ENCODE measurements at regions of chr13 and their contacts with region 1.

Region 1: GRCh38 chr13:30465585-30466357 is at the start of gene HMGB1:
- DNase-seq: peak; percentile 96 to 98 (median 96)
- H3K4me3 ChIP-seq: peak within 1 kb of the TSS; percentile 69 to 80
- H3K4me3 Mint-ChIP-seq: peak within 1 kb of the TSS; percentile 93 to 98 (median 95)
- H3K27ac ChIP-seq: peak within 1 kb of the TSS; percentile 90
- H3K27ac Mint-ChIP-seq: peak within 1 kb of the TSS; percentile 97 to 99 (median 99)
- H3K4me1 ChIP-seq: peaks cover 33% of the 10 kb centered on the region
- H3K4me1 Mint-ChIP-seq: peaks cover 15 to 52% (median 24%) of the 10 kb centered on the region in 4 donors
- H3K27me3 ChIP-seq: no peaks in the 10 kb centered on the region
- H3K27me3 Mint-ChIP-seq: peaks cover 2 to 3% of the 10 kb centered on the region in 2 donors
- total RNA-seq, gene HMGB1: 311 to 331 TPM

Region 2: DNA sequence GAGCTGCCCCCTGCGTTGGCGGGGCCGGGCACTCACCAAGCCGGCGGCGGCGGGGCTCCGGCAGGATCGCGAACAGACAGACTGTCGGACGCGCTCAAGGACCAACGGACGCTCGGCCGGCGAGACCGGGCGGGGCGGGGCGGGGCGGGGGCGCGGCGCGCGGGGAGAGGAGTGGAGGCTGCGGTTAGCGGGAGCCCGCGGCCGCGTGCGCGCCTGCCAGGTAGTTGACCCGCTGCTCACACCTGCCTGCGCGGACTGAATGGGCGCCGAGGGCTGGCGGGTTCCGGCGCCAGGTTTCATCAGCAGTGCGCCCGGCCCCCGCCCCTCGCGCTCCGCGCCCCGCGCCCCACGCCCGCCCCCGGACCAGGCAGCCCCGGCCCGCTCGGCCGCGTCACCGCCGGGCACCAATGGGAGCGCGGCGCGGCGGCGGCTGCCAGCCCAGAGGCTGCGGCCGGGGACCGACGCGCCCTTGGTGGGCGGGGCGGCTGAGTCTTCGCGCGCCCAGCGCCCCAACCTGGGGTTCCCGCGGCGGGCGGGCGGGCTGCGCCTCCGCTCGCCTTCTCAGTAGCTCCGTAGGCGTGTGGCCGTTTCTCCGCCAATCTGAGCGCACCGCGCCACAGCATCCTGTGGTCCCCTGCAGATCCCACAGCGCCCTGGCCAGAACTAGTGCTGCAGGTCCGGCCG is 870.2 kb before region 1 on chr13 and contains the start of gene SLC7A1:
- CTCF ChIA-PET with region 1: no interaction called
- POLR2A ChIA-PET with region 1: no interaction called
- intact Hi-C with region 1: loop called (anchors 2 kb)
- DNase-seq: peak; percentile 80 to 90 (median 88)
- H3K4me3 ChIP-seq: peak within 1 kb of the TSS; percentile 59 to 61
- H3K4me3 Mint-ChIP-seq: peak within 1 kb of the TSS; percentile 87 to 94 (median 92)
- H3K27ac ChIP-seq: peak within 1 kb of the TSS; percentile 66
- H3K27ac Mint-ChIP-seq: peak within 1 kb of the TSS; percentile 90 to 97 (median 93)
- H3K4me1 ChIP-seq: peaks cover 25% of the 10 kb centered on the region
- H3K4me1 Mint-ChIP-seq: peaks cover 22 to 49% (median 34%) of the 10 kb centered on the region in 4 donors
- H3K27me3 ChIP-seq: no peaks in the 10 kb centered on the region
- H3K27me3 Mint-ChIP-seq: peaks cover 0 to 1% of the 10 kb centered on the region in 2 donors
- total RNA-seq, gene SLC7A1: 38.6 to 42.6 TPM

Region 3: DNA sequence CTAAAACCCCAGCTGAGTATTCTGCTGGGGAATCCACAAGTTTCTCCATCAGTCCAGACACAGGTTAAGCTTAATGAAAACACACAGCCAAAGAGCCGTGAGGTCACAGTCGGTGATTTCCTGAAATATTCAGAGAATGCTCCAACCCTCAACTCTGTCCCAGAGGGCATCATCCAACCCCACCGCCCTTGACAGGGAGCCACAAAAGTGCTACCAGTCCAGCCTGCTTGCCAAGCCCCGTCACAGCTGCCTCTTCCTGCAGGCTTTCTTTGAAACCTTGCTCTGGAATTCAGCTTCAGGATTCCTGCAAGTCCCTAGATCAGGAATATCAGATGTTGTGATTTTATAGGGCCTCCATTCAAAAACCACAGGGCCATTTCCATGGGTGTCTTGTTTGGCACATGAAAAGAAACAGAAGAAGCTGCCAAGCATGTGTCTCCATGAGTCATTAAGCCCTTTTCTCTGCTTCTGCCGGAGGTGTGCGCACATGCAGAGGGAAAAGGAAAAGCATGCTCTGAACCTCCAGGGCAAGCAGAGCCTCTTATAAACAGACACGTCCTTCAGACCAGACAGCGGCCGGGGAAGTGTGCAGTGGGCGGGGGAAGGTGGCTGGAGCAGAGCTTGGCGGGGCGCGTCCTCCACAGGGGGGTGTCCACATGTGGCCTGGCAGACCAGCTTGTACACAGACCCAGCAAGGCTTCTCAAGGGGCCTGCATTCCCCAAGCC is 323.1 kb before region 1 on chr13:
- CTCF ChIA-PET with region 1: interaction called, 4 read pairs
- POLR2A ChIA-PET with region 1: interaction called, 27 read pairs
- intact Hi-C with region 1: no loop called
- DNase-seq: peak; percentile 13 to 64 (median 22)
- H3K4me3 ChIP-seq: no peak overlapping the region
- H3K4me3 Mint-ChIP-seq: peak overlapping the region in 7 of 8 donors; percentile 4 to 74 (median 53)
- H3K27ac ChIP-seq: peak overlapping the region; percentile 27
- H3K27ac Mint-ChIP-seq: peak overlapping the region; percentile 83 to 92 (median 88)
- H3K4me1 ChIP-seq: peaks cover 67% of the 10 kb centered on the region
- H3K4me1 Mint-ChIP-seq: peaks cover 49 to 86% (median 70%) of the 10 kb centered on the region in 4 donors
- H3K27me3 ChIP-seq: no peaks in the 10 kb centered on the region
- H3K27me3 Mint-ChIP-seq: no peaks in the 10 kb centered on the region

Region 4: GRCh38 chr13:30306762-30307193 is 159.0 kb before region 1 on chr13:
- CTCF ChIA-PET with region 1: interaction called, 4 read pairs
- POLR2A ChIA-PET with region 1: interaction called, 26 read pairs
- intact Hi-C with region 1: loop called (anchors 1 kb)
- DNase-seq: peak; percentile 88 to 92 (median 89)
- H3K4me3 ChIP-seq: peak overlapping the region; percentile 55 to 79
- H3K4me3 Mint-ChIP-seq: peak overlapping the region; percentile 90 to 93 (median 91)
- H3K27ac ChIP-seq: peak overlapping the region; percentile 68
- H3K27ac Mint-ChIP-seq: peak overlapping the region; percentile 75 to 93 (median 90)
- H3K4me1 ChIP-seq: peaks cover 28% of the 10 kb centered on the region
- H3K4me1 Mint-ChIP-seq: peaks cover 25 to 46% (median 30%) of the 10 kb centered on the region in 4 donors
- H3K27me3 ChIP-seq: no peaks in the 10 kb centered on the region
- H3K27me3 Mint-ChIP-seq: no peaks in the 10 kb centered on the region

Region 5: GRCh38 chr13:30395192-30396084 is 70.3 kb before region 1 on chr13:
- CTCF ChIA-PET with region 1: interaction called, 10 read pairs
- POLR2A ChIA-PET with region 1: interaction called, 28 read pairs
- intact Hi-C with region 1: no loop called
- DNase-seq: peak; percentile 67 to 90 (median 75)
- H3K4me3 ChIP-seq: peak overlapping the region; percentile 87 to 90
- H3K4me3 Mint-ChIP-seq: peak overlapping the region; percentile 89 to 97 (median 91)
- H3K27ac ChIP-seq: peak overlapping the region; percentile 69
- H3K27ac Mint-ChIP-seq: peak overlapping the region; percentile 84 to 97 (median 95)
- H3K4me1 ChIP-seq: peaks cover 36% of the 10 kb centered on the region
- H3K4me1 Mint-ChIP-seq: peaks cover 19 to 61% (median 38%) of the 10 kb centered on the region in 4 donors
- H3K27me3 ChIP-seq: no peaks in the 10 kb centered on the region
- H3K27me3 Mint-ChIP-seq: no peaks in the 10 kb centered on the region

Region 6: DNA sequence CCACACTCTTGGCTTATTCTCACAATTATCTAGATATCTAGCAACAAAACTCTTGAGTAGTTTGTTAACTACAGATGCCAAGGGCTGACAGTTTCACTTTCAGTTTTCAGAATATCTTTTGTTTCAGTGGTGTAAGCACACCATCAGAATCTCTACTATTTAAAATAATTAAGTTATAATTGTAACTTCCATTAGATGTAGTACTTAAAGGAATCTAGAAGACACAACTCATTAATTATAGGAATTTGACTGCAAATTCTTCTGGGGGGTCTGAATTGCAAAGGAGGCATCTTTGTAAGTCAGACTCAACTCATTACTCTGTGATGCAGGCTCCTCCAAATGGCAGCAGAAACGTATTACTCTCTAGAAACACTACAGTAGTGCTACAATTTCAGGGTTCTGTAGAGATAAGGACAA is 107.1 kb after region 1 on chr13:
- CTCF ChIA-PET with region 1: interaction called, 3 read pairs
- POLR2A ChIA-PET with region 1: interaction called, 6 read pairs
- intact Hi-C with region 1: loop called (anchors 1 kb)
- DNase-seq: peak; percentile 33 to 53 (median 43)
- H3K4me3 ChIP-seq: peak overlapping the region; percentile 37 to 64
- H3K4me3 Mint-ChIP-seq: peak overlapping the region; percentile 67 to 88 (median 79)
- H3K27ac ChIP-seq: peak overlapping the region; percentile 62
- H3K27ac Mint-ChIP-seq: peak overlapping the region; percentile 56 to 94 (median 91)
- H3K4me1 ChIP-seq: peaks cover 36% of the 10 kb centered on the region
- H3K4me1 Mint-ChIP-seq: peaks cover 28 to 47% (median 33%) of the 10 kb centered on the region in 4 donors
- H3K27me3 ChIP-seq: no peaks in the 10 kb centered on the region
- H3K27me3 Mint-ChIP-seq: no peaks in the 10 kb centered on the region

Region 7: GRCh38 chr13:30802953-30803478 is 337.2 kb after region 1 on chr13:
- CTCF ChIA-PET with region 1: no interaction called
- POLR2A ChIA-PET with region 1: interaction called, 9 read pairs
- intact Hi-C with region 1: loop called (anchors 2 kb)
- DNase-seq: peak; percentile 71 to 78 (median 74)
- H3K4me3 ChIP-seq: no peak overlapping the region
- H3K4me3 Mint-ChIP-seq: peak overlapping the region; percentile 32 to 76 (median 62)
- H3K27ac ChIP-seq: no peak overlapping the region
- H3K27ac Mint-ChIP-seq: peak overlapping the region in 4 of 7 donors; percentile 46 to 70 (median 62)
- H3K4me1 ChIP-seq: peaks cover 9% of the 10 kb centered on the region
- H3K4me1 Mint-ChIP-seq: peaks cover 7 to 21% (median 8%) of the 10 kb centered on the region in 4 donors
- H3K27me3 ChIP-seq: no peaks in the 10 kb centered on the region
- H3K27me3 Mint-ChIP-seq: no peaks in the 10 kb centered on the region